Prostate gland (tissue), 2 donors: ENCODE measurements at regions of chrX and their contacts with region 1.

Region 1: DNA sequence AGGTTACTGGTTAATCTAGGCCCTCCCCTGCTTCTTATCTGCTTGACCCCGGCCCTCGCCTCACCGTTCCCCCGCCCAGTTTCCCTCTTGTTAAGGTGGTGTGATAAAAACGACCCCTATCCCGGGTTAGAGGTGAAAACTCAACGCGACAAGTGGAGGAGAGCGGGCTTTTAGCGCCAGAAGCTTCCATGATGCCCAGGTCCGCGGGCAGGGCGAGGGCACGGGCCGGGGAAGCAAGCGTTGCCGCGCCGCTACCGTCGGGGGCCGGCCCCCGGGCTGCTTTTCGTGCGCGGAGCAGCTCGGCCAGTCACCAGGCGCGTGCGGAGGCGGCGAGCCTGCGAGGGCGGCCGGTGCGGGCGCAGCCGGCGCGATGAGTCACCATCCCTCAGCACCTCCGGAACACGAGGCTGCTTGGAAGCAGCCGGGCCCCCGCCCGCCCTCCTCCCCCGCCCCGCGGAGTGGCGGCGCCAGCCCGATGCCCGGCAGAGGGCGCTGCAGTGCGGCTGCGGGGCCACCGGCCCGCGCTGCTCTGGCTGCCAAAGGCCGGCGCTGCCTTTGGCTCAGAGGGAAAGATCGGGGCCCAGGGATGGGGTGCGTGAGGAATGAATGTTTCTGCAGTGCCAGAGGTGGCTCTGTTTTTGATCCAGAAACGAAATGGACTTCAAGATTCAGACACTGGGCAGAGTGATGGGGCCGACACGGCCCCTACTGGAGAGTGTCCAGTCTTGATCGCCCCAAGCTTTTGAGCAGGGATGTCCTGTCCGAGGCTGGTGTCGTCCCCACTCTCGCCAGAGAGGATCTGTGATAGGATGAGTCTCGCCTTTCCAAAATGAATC is 107.8 kb downstream of the NHSL2 start:
- DNase-seq: peak; percentile 76
- H3K4me3 ChIP-seq: no peak overlapping the region
- H3K27ac ChIP-seq: peak overlapping the region in 1 of 2 donors; percentile 42
- H3K4me1 ChIP-seq: no peaks in the 10 kb centered on the region
- H3K27me3 ChIP-seq: no peaks in the 10 kb centered on the region
- CTCF ChIP-seq: peak; percentile 53 to 85 (median 76)
- POLR2A ChIP-seq: no peak

Region 2: DNA sequence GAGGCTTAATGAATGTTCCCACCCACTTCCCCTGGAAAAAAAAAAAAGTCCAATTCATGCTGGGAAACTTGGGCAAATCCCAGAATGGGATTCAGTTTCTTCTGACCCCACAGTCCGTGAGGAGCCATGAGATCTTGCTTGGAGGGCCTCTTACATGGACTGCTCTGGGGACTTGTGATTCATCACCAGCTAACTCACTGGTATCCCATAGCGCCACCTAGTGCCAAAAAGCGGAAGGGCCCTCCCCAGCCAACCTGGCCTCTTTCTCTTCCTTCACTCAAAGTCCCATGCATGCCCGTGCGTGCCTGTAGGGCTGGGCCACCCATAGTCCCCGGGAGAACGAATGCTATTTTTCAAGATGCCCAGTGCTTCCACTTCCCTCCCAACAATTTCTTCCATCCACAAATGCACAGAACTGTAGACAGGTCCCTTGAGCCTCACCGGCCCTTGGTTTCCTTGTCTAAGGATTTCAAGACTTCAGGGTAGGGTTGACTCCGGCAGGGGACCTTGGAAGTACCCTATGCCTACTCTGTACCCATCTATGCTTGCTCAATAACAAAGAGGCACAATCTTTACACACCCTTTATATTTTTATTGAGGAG is 108.1 kb after region 1 on chrX:
- intact Hi-C with region 1: loop called (anchors 1 kb)
- DNase-seq: peak; percentile 77
- H3K4me3 ChIP-seq: no peak overlapping the region
- H3K27ac ChIP-seq: no peak overlapping the region
- H3K4me1 ChIP-seq: no peaks in the 10 kb centered on the region
- H3K27me3 ChIP-seq: no peaks in the 10 kb centered on the region
- CTCF ChIP-seq: peak; percentile 37 to 83 (median 77)
- POLR2A ChIP-seq: no peak